ENCODE measurements at regions of chr4 and their contacts with region 1.

Region 1: GRCh38 chr4:40301603-40302002 is 33.5 kb upstream of the CHRNA9 start:
- DNase-seq: peak; percentile 64 to 93 (median 77)
- ATAC-seq: peak; percentile 87
- H3K4me3 ChIP-seq: no peak overlapping the region
- H3K4me3 Mint-ChIP-seq: peak overlapping the region; percentile 75
- H3K27ac ChIP-seq: peak overlapping the region; percentile 60 to 82
- H3K27ac Mint-ChIP-seq: peak overlapping the region; percentile 91
- H3K4me1 ChIP-seq: peaks cover 93% of the 10 kb centered on the region
- H3K4me1 Mint-ChIP-seq: peaks cover 83% of the 10 kb centered on the region
- H3K27me3 ChIP-seq: no peaks in the 10 kb centered on the region
- H3K27me3 Mint-ChIP-seq: no peaks in the 10 kb centered on the region
- CTCF ChIP-seq: no peak

Region 2: DNA sequence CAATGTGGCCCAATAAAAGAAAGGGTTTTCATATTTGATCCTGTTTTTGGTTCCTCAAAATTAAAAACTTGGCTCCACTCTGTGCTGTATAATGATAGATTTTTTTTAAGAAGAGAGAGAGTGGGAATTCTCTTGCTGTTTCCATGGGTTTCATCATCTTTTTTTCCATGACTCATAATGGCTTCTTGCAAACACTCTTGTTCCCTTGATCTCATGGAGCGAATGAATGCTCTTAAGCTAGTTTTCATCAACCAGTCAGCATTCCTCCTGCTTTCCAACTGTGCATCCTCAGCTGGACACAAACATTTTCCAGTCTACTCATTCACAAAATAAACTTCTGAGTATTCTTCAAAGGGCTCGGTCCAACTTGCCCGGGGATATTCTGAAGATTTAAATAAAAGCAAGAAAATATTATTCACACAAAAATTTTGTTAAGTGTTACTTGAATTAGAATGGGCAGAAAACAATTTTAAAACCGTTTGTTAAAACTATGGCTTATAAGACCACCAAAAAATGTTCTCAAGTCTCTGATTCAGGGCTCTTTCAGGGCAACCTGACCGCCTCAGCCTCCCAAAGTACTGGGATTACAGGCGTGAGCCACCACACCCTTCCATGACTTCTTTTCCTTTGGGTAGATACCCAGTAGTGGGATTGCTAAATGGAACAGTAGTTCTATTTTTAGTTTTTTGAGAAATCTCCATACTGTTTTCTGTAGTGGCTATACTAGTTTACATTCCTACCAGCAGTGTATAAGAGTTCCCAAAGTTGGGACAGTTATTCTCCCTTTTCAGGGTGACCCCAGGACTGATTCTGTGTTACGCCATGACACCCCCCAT is 1334.1 kb before region 1 on chr4:
- CTCF ChIA-PET with region 1: no interaction called
- POLR2A ChIA-PET with region 1: no interaction called
- intact Hi-C with region 1: no loop called
- DNase-seq: no peak
- ATAC-seq: no peak
- H3K4me3 ChIP-seq: no peak overlapping the region
- H3K4me3 Mint-ChIP-seq: no peak overlapping the region
- H3K27ac ChIP-seq: no peak overlapping the region
- H3K27ac Mint-ChIP-seq: no peak overlapping the region
- H3K4me1 ChIP-seq: no peaks in the 10 kb centered on the region
- H3K4me1 Mint-ChIP-seq: peaks cover 7% of the 10 kb centered on the region
- H3K27me3 ChIP-seq: no peaks in the 10 kb centered on the region
- H3K27me3 Mint-ChIP-seq: no peaks in the 10 kb centered on the region
- CTCF ChIP-seq: no peak

Region 3: GRCh38 chr4:40193016-40193571 is 108.5 kb before region 1 on chr4:
- CTCF ChIA-PET with region 1: interaction called, 5 read pairs
- POLR2A ChIA-PET with region 1: interaction called, 73 read pairs
- intact Hi-C with region 1: loop called in 1 of 2 experiments (anchors 2 kb)
- DNase-seq: peak in 8 of 14 experiments; percentile 43 to 79 (median 51)
- ATAC-seq: peak; percentile 25
- H3K4me3 ChIP-seq: peak overlapping the region; percentile 74
- H3K4me3 Mint-ChIP-seq: peak overlapping the region; percentile 94
- H3K27ac ChIP-seq: peak overlapping the region; percentile 67 to 99
- H3K27ac Mint-ChIP-seq: peak overlapping the region; percentile 99
- H3K4me1 ChIP-seq: peaks cover 43% of the 10 kb centered on the region
- H3K4me1 Mint-ChIP-seq: peaks cover 72% of the 10 kb centered on the region
- H3K27me3 ChIP-seq: no peaks in the 10 kb centered on the region
- H3K27me3 Mint-ChIP-seq: peaks cover 5% of the 10 kb centered on the region
- CTCF ChIP-seq: no peak

Region 4: DNA sequence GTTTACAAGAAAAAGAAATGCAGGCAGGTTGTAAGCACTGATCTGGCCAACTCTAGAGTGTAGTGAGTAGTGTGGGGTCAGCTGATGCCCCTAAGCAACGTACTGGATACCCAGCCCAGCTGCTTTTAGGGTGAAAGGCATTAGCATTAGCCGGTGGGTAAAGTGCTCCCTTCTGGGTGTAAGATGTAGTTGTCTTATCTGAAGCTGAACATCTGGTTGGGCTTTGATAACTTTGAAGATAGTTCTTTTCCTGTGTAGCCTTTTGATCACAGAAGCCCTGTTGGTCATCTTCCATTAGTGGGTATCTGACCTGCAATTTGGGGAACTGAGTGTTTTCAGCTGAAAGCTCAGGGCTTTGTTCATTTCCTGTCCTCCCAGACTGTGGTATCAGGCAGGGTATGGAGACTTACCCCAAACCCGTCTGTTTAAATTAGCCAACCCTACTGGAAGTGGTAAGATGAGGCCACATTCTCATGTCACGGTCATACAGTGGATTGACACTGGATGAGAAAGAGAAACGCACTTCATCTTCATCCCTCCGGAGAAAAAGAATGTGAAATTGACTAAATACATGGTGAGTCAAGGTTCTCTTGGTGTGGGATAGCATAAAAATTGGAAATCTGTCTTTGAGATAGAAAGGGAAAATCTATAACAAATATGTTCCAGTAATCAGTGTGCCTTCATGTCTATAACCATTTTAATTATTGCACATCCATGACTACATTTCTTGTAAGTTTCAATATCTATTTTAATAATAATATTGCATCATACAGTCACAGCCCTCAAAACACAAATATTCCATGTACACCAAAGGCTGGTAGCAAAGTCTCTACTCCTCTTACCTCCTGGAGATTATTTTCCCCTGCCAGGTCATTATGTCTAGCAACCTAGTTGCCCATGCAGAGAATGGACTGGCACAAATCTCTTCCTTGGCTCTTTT is 96.1 kb before region 1 on chr4:
- CTCF ChIA-PET with region 1: no interaction called
- POLR2A ChIA-PET with region 1: interaction called, 98 read pairs
- intact Hi-C with region 1: loop called in 1 of 2 experiments (anchors 5 kb)
- DNase-seq: peak in 4 of 14 experiments; percentile 41 to 76 (median 70)
- ATAC-seq: peak; percentile 41
- H3K4me3 ChIP-seq: peak overlapping the region; percentile 74
- H3K4me3 Mint-ChIP-seq: peak overlapping the region; percentile 100
- H3K27ac ChIP-seq: peak overlapping the region; percentile 93 to 99
- H3K27ac Mint-ChIP-seq: peak overlapping the region; percentile 99
- H3K4me1 ChIP-seq: peaks cover 42% of the 10 kb centered on the region
- H3K4me1 Mint-ChIP-seq: peaks cover 79% of the 10 kb centered on the region
- H3K27me3 ChIP-seq: no peaks in the 10 kb centered on the region
- H3K27me3 Mint-ChIP-seq: no peaks in the 10 kb centered on the region
- CTCF ChIP-seq: no peak

Region 5: DNA sequence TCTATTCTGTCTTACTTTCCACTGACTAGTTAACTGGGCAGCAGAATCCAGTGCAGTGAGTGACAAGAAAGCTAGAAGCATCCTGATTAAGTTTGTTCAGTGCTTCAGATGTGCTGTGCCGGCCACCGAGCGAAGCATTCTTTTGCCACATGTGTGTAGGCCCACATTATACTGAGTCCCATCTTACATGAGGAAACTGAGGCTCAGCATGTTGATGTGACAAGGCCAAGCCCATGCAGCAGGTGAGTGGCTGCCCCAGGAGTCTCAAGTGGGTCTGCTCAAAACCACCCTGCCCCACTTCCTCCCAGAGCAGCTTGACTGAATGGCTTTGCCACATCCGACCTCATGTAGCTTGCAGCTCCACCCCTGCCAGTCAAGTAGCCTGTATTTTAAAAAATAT is 54.3 kb before region 1 on chr4:
- CTCF ChIA-PET with region 1: interaction called, 7 read pairs
- POLR2A ChIA-PET with region 1: interaction called, 41 read pairs
- intact Hi-C with region 1: loop called in 1 of 2 experiments (anchors 5 kb)
- DNase-seq: peak; percentile 51 to 87 (median 66)
- ATAC-seq: peak; percentile 81
- H3K4me3 ChIP-seq: no peak overlapping the region
- H3K4me3 Mint-ChIP-seq: peak overlapping the region; percentile 45
- H3K27ac ChIP-seq: peak overlapping the region; percentile 71 to 72
- H3K27ac Mint-ChIP-seq: peak overlapping the region; percentile 93
- H3K4me1 ChIP-seq: peaks cover 84% of the 10 kb centered on the region
- H3K4me1 Mint-ChIP-seq: peaks cover 88% of the 10 kb centered on the region
- H3K27me3 ChIP-seq: no peaks in the 10 kb centered on the region
- H3K27me3 Mint-ChIP-seq: no peaks in the 10 kb centered on the region
- CTCF ChIP-seq: no peak

Region 6: DNA sequence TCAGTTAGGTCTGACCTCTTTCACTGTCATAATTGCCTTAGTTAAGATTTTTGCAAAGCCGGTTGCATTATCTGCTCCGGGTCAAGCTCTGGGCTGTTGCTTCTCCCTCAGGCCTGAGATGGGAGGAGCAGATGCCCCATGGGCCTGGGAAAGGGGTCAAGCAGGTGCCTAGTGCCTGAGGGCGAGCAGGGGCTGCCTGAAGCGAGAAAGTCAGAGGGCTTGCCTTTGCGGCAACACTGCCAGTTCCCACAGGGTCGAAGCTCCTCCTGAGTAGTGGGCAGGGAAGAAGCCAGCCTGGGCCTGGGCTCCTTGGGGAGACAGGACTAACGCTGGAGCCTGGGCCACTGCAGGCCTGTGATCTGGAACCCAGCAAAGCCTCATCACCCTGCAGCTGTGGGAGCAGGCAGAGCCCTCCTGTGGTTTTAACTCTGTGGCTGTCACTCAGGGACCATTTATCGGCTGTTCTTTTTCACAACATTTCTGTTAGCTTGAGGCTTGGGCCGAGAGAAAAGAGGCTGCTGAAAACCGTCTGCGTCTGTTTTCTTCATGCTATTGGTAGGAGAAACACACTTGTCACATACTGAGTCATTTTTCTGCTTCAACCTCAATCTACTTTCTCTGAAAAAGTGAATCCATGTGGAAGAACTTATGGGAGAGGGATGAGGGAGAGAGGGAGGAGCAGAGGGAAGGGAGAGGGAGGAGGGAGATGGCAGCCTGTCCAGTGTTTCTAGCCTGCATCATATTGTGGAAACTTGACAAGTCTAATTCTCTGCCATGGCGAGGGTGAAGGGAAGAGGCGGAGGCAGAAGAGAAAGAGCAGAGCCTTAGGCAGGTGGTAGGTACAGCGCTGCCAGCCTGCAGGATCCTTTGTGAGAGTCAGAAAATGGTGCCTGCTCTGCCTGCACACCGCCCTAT is 36.4 kb before region 1 on chr4:
- CTCF ChIA-PET with region 1: no interaction called
- POLR2A ChIA-PET with region 1: interaction called, 10 read pairs
- intact Hi-C with region 1: no loop called
- DNase-seq: peak in 10 of 14 experiments; percentile 27 to 81 (median 49)
- ATAC-seq: peak; percentile 78
- H3K4me3 ChIP-seq: peak overlapping the region; percentile 28
- H3K4me3 Mint-ChIP-seq: peak overlapping the region; percentile 83
- H3K27ac ChIP-seq: peak overlapping the region; percentile 46 to 52
- H3K27ac Mint-ChIP-seq: peak overlapping the region; percentile 99
- H3K4me1 ChIP-seq: peaks cover 22% of the 10 kb centered on the region
- H3K4me1 Mint-ChIP-seq: peaks cover 70% of the 10 kb centered on the region
- H3K27me3 ChIP-seq: no peaks in the 10 kb centered on the region
- H3K27me3 Mint-ChIP-seq: no peaks in the 10 kb centered on the region
- CTCF ChIP-seq: no peak

Region 7: GRCh38 chr4:40289366-40290188 is 12.0 kb before region 1 on chr4:
- CTCF ChIA-PET with region 1: interaction called, 72 read pairs
- POLR2A ChIA-PET with region 1: interaction called, 30 read pairs
- intact Hi-C with region 1: loop called (anchors 1 to 2 kb)
- DNase-seq: peak in 5 of 14 experiments; percentile 31 to 70 (median 59)
- ATAC-seq: peak; percentile 88
- H3K4me3 ChIP-seq: peak overlapping the region; percentile 8
- H3K4me3 Mint-ChIP-seq: peak overlapping the region; percentile 50
- H3K27ac ChIP-seq: peak overlapping the region; percentile 39 to 62
- H3K27ac Mint-ChIP-seq: peak overlapping the region; percentile 85
- H3K4me1 ChIP-seq: peaks cover 49% of the 10 kb centered on the region
- H3K4me1 Mint-ChIP-seq: peaks cover 74% of the 10 kb centered on the region
- H3K27me3 ChIP-seq: no peaks in the 10 kb centered on the region
- H3K27me3 Mint-ChIP-seq: no peaks in the 10 kb centered on the region
- CTCF ChIP-seq: no peak

Region 8: DNA sequence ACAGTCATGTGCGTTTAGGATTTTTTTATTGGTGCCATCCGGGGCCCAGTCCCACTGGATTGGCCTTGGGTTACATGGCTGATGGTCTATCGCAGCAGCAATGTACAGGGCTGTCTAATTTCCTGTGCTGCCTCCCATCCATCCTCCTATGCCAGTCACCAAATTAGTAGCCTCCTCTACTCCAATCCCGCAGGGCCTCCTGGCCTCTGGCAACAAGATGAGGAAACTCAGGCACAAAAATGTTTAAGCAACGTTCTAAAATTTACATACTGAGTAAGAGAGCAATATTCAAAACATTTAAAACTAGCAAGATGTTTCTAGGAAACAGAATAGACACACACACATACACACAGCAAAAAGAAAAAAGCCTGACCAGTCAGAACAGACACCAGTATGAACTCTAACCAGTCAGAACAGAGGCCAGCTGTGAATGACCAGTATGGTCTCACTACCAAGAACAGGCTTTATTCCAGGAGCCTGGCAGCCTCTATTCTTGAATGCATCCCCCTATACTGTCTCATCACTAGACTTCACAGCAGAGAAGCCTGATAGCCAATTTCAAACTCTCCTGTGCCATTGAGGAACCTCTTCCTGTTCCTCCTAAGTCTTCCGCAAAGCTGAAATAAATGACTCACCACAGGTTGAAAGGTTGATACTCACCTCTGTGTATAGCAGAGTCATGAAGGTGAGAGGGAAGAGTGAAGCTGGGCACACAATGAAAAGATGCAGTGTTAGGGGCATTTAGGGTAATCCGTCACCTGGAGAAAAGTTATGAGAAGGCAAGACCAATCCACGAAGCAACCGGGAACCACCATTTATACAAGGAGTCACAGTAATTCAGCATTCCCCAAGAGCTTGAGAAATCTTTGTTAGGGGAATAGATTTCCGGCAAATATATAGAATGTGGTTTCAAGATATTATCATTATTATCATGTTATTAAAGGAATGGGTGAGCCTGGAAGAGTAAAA is 76.3 kb after region 1 on chr4:
- CTCF ChIA-PET with region 1: no interaction called
- POLR2A ChIA-PET with region 1: no interaction called
- intact Hi-C with region 1: no loop called
- DNase-seq: no peak
- ATAC-seq: no peak
- H3K4me3 ChIP-seq: no peak overlapping the region
- H3K4me3 Mint-ChIP-seq: no peak overlapping the region
- H3K27ac ChIP-seq: no peak overlapping the region
- H3K27ac Mint-ChIP-seq: no peak overlapping the region
- H3K4me1 ChIP-seq: no peaks in the 10 kb centered on the region
- H3K4me1 Mint-ChIP-seq: no peaks in the 10 kb centered on the region
- H3K27me3 ChIP-seq: no peaks in the 10 kb centered on the region
- H3K27me3 Mint-ChIP-seq: no peaks in the 10 kb centered on the region
- CTCF ChIP-seq: no peak

Region 9: DNA sequence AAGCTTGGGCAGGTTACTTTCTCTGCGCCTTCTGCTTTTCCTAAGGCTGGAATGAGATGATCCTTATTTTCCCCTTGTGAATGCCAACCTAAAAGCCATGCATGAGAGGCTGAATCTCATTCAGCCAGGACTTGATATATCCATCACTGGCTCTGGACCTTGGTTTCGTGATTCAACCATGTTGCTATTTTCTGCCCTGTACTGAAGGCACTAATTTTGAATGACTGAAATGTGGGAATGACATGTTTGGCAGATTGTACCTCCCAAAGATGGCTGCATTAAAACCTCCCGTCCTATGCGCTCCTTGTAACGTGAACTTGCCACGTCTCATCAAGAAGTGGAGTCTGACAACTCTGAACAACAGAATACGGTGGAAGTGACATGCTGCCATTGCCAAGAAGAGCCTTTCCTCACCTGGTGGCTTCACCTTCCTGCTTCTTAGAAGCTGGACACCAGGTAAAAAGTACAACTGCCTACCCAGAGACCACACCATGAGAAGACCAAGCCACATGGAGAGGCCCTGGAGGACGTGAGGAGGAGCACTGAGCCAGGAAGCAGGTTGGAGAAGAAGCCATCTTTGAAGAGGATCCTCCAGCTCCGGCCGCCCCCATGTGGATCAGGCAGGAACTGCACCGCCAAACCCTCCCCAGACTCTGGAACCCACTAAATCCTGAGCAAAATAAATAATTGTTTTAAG is 622.6 kb after region 1 on chr4:
- CTCF ChIA-PET with region 1: no interaction called
- POLR2A ChIA-PET with region 1: no interaction called
- intact Hi-C with region 1: no loop called
- DNase-seq: peak; percentile 32 to 67 (median 48)
- ATAC-seq: peak; percentile 74
- H3K4me3 ChIP-seq: no peak overlapping the region
- H3K4me3 Mint-ChIP-seq: no peak overlapping the region
- H3K27ac ChIP-seq: no peak overlapping the region
- H3K27ac Mint-ChIP-seq: no peak overlapping the region
- H3K4me1 ChIP-seq: no peaks in the 10 kb centered on the region
- H3K4me1 Mint-ChIP-seq: no peaks in the 10 kb centered on the region
- H3K27me3 ChIP-seq: no peaks in the 10 kb centered on the region
- H3K27me3 Mint-ChIP-seq: peaks cover 29% of the 10 kb centered on the region
- CTCF ChIP-seq: peak; percentile 66

Measured in CD4-positive, alpha-beta T cell (primary cell).